GM10248 (cell line): ENCODE measurements at regions of chr10 and their contacts with region 1.

Region 1: DNA sequence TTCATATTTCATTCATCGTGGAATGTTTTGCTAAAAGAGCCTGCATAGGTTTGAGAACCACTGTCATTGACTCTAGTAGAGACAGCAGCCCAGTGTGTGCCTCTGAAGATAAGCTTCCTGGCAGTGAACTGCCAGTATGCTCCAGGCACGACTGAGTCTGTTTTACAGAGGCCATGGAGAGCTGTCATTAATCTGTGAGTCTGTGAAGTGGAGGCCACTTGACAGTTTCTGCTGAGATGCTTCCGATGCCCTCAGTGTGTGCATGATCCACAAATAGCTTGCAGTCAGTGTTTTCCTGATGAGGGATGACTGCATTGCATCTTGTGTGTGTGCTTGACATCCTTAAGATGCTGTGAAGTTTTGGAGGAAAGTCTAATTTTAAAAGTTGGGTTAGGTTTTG is 162.2 kb downstream of the PFKFB3 start:
- DNase-seq: no peak
- CTCF ChIP-seq: no peak

Region 2: GRCh38 chr10:6382081-6382480 is 17.2 kb after region 1 on chr10:
- CTCF ChIA-PET with region 1: interaction called, 12 read pairs
- POLR2A ChIA-PET with region 1: no interaction called
- DNase-seq: peak; percentile 39
- CTCF ChIP-seq: no peak